CD8-positive, alpha-beta T cell (primary cell): ENCODE measurements at regions of chr21 and their contacts with region 1.

Region 1: GRCh38 chr21:26715878-26716506 is 129.2 kb downstream of the ADAMTS1 start:
- DNase-seq: peak in 3 of 9 experiments; percentile 22 to 36 (median 24)
- ATAC-seq: no peak
- H3K4me3 ChIP-seq: no peak overlapping the region
- H3K4me3 Mint-ChIP-seq: no peak overlapping the region
- H3K27ac ChIP-seq: no peak overlapping the region
- H3K27ac Mint-ChIP-seq: no peak overlapping the region
- H3K4me1 ChIP-seq: no peaks in the 10 kb centered on the region
- H3K4me1 Mint-ChIP-seq: no peaks in the 10 kb centered on the region
- H3K27me3 ChIP-seq: no peaks in the 10 kb centered on the region
- H3K27me3 Mint-ChIP-seq: peaks cover 11% of the 10 kb centered on the region
- CTCF ChIP-seq: peak; percentile 42

Region 2: GRCh38 chr21:25881525-25882376 is 834.2 kb before region 1 on chr21:
- CTCF ChIA-PET with region 1: interaction called, 5 read pairs
- POLR2A ChIA-PET with region 1: no interaction called
- intact Hi-C with region 1: loop called in 1 of 2 experiments (anchors 1 kb)
- DNase-seq: peak; percentile 27 to 71 (median 53)
- ATAC-seq: peak; percentile 69
- H3K4me3 ChIP-seq: no peak overlapping the region
- H3K4me3 Mint-ChIP-seq: no peak overlapping the region
- H3K27ac ChIP-seq: no peak overlapping the region
- H3K27ac Mint-ChIP-seq: no peak overlapping the region
- H3K4me1 ChIP-seq: no peaks in the 10 kb centered on the region
- H3K4me1 Mint-ChIP-seq: no peaks in the 10 kb centered on the region
- H3K27me3 ChIP-seq: no peaks in the 10 kb centered on the region
- H3K27me3 Mint-ChIP-seq: no peaks in the 10 kb centered on the region
- CTCF ChIP-seq: peak; percentile 82

Region 3: DNA sequence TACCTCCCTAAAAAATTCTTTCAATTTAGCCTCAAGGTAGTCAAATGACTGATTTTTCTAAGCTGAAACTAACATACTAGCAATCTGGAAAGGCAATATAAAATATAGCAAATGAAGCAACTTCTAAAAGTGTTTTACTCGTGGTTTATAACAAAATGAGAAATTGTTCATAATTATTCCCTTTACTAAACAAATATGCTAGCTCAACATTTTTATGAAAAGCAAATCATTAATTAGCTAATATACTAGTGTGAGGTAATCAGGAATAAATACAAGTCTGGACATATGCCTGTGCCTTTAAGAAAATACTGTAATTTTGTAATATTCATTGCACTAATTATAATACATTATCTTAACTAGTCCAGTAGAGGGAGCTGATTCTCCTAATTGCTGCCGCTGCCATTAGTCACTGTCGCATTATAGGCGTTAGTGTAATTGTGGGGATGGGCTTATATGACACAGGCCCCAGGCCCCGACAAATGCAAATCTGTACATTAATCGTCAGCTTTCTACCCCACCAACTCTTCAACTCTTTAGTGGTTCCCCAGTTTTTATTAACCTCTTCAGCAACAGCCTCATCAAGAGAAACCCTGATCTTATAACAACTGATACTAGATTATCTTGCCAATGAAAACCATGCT is 820.3 kb before region 1 on chr21:
- CTCF ChIA-PET with region 1: interaction called, 8 read pairs
- POLR2A ChIA-PET with region 1: no interaction called
- intact Hi-C with region 1: loop called (anchors 5 kb)
- DNase-seq: peak in 2 of 9 experiments; percentile 15 to 37
- ATAC-seq: peak; percentile 57
- H3K4me3 ChIP-seq: no peak overlapping the region
- H3K4me3 Mint-ChIP-seq: no peak overlapping the region
- H3K27ac ChIP-seq: no peak overlapping the region
- H3K27ac Mint-ChIP-seq: no peak overlapping the region
- H3K4me1 ChIP-seq: peaks cover 5% of the 10 kb centered on the region
- H3K4me1 Mint-ChIP-seq: peaks cover 10% of the 10 kb centered on the region
- H3K27me3 ChIP-seq: no peaks in the 10 kb centered on the region
- H3K27me3 Mint-ChIP-seq: no peaks in the 10 kb centered on the region
- CTCF ChIP-seq: peak; percentile 49

Region 4: DNA sequence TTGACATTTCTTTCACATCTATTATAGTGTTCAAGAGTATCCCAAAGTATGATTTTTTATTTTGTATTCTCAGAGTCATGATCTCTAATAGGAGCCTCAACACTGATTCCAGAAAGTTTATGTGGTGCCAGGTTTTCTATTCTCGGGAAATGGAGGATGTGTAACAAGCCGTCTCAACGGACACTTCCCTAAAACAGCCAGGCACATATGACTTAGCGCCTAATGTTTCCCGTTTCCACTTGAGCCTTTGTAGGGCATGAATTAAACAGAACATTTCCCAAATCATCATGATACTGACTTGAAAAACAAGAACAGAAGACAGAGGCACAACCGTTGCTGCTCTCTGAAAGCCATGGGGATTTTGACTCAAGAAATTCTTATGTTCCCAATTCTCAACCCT is 150.9 kb before region 1 on chr21:
- CTCF ChIA-PET with region 1: no interaction called
- POLR2A ChIA-PET with region 1: no interaction called
- intact Hi-C with region 1: no loop called
- DNase-seq: no peak
- ATAC-seq: no peak
- H3K4me3 ChIP-seq: no peak overlapping the region
- H3K4me3 Mint-ChIP-seq: no peak overlapping the region
- H3K27ac ChIP-seq: no peak overlapping the region
- H3K27ac Mint-ChIP-seq: no peak overlapping the region
- H3K4me1 ChIP-seq: no peaks in the 10 kb centered on the region
- H3K4me1 Mint-ChIP-seq: no peaks in the 10 kb centered on the region
- H3K27me3 ChIP-seq: no peaks in the 10 kb centered on the region
- H3K27me3 Mint-ChIP-seq: peaks cover 11% of the 10 kb centered on the region
- CTCF ChIP-seq: no peak

Region 5: DNA sequence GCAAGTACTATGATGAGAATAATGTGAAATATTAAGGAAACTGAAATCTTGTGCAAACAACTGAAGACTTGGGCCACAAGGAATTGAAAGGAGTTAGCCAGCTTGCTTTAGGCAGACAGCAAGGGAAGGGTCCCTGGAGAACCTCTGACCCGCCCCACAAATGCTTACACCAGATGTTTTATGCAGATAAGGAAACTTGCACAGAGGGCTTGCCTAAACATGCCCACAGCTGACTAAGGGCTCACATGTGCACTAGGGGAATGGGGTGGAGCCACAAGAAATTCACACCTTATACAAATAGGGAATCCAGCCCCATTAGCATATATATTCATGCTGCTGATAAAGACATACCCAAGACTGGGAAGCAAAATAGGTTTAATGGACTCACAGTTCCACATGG is 56.8 kb before region 1 on chr21:
- CTCF ChIA-PET with region 1: no interaction called
- POLR2A ChIA-PET with region 1: no interaction called
- intact Hi-C with region 1: no loop called
- DNase-seq: no peak
- ATAC-seq: no peak
- H3K4me3 ChIP-seq: no peak overlapping the region
- H3K4me3 Mint-ChIP-seq: no peak overlapping the region
- H3K27ac ChIP-seq: no peak overlapping the region
- H3K27ac Mint-ChIP-seq: no peak overlapping the region
- H3K4me1 ChIP-seq: no peaks in the 10 kb centered on the region
- H3K4me1 Mint-ChIP-seq: no peaks in the 10 kb centered on the region
- H3K27me3 ChIP-seq: no peaks in the 10 kb centered on the region
- H3K27me3 Mint-ChIP-seq: no peaks in the 10 kb centered on the region
- CTCF ChIP-seq: no peak

Region 6: GRCh38 chr21:26679284-26679683 is 36.7 kb before region 1 on chr21:
- CTCF ChIA-PET with region 1: no interaction called
- POLR2A ChIA-PET with region 1: no interaction called
- intact Hi-C with region 1: no loop called
- DNase-seq: no peak
- ATAC-seq: no peak
- H3K4me3 ChIP-seq: no peak overlapping the region
- H3K4me3 Mint-ChIP-seq: no peak overlapping the region
- H3K27ac ChIP-seq: no peak overlapping the region
- H3K27ac Mint-ChIP-seq: no peak overlapping the region
- H3K4me1 ChIP-seq: no peaks in the 10 kb centered on the region
- H3K4me1 Mint-ChIP-seq: no peaks in the 10 kb centered on the region
- H3K27me3 ChIP-seq: no peaks in the 10 kb centered on the region
- H3K27me3 Mint-ChIP-seq: no peaks in the 10 kb centered on the region
- CTCF ChIP-seq: no peak

Region 7: GRCh38 chr21:26769613-26770188 is 53.7 kb after region 1 on chr21:
- CTCF ChIA-PET with region 1: no interaction called
- POLR2A ChIA-PET with region 1: no interaction called
- intact Hi-C with region 1: no loop called
- DNase-seq: peak in 2 of 9 experiments; percentile 5 to 17
- ATAC-seq: no peak
- H3K4me3 ChIP-seq: no peak overlapping the region
- H3K4me3 Mint-ChIP-seq: no peak overlapping the region
- H3K27ac ChIP-seq: no peak overlapping the region
- H3K27ac Mint-ChIP-seq: no peak overlapping the region
- H3K4me1 ChIP-seq: no peaks in the 10 kb centered on the region
- H3K4me1 Mint-ChIP-seq: no peaks in the 10 kb centered on the region
- H3K27me3 ChIP-seq: no peaks in the 10 kb centered on the region
- H3K27me3 Mint-ChIP-seq: no peaks in the 10 kb centered on the region
- CTCF ChIP-seq: no peak